Calu3 (cell line): ENCODE measurements at regions of chr6 and their contacts with region 1.

Region 1: DNA sequence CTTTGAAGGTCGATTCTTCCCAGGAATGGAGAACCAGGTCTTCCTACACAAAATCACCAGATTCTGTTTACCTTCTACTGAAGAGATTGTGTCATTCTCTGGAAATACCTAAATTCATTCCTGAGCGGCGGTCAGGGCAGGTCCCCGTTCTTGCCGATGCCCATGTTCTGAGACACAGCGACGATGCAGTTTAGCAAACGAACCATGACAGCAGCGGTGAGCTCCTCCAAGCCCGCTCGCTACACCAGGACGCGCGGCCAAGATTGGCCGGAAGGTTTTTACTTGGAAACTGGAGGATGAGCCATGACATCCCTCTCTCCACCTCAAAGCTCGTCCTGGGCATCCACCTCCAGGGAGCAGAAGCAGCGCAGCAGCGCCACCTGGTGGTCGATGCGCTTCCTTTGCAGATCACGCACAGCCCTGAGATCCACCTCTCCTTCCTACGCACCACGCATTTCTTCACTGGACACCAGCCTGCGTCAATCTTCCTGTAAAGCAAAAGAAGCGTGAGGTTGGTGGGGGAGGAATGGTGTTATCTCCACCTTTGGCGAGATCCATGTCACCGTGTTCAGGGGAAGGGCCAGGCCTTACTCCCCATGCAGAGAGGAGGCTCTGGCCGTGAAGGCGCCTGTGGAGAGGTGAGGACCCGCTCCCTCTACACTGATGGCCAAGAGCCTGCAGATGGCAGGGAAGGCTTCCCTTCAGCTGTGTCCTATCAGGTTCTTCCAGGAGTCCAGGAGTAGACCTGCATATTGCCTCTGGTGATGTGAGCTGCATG is 9.9 kb upstream of the HLA-B start:
- DNase-seq: peak; percentile 97
- H3K4me3 Mint-ChIP-seq: peak overlapping the region; percentile 54
- H3K27ac Mint-ChIP-seq: peak overlapping the region; percentile 15
- H3K4me1 Mint-ChIP-seq: peaks cover 9% of the 10 kb centered on the region
- H3K27me3 Mint-ChIP-seq: peaks cover 98% of the 10 kb centered on the region
- CTCF ChIP-seq: peak; percentile 99

Region 2: GRCh38 chr6:31139599-31139998 is 227.3 kb before region 1 on chr6:
- CTCF ChIA-PET with region 1: interaction called, 8 read pairs
- intact Hi-C with region 1: loop called (anchors 1 kb)
- DNase-seq: no peak
- H3K4me3 Mint-ChIP-seq: no peak overlapping the region
- H3K27ac Mint-ChIP-seq: no peak overlapping the region
- H3K4me1 Mint-ChIP-seq: peaks cover 29% of the 10 kb centered on the region
- H3K27me3 Mint-ChIP-seq: no peaks in the 10 kb centered on the region
- CTCF ChIP-seq: no peak

Region 3: GRCh38 chr6:31197559-31198305 is 169.2 kb before region 1 on chr6:
- CTCF ChIA-PET with region 1: interaction called, 77 read pairs
- intact Hi-C with region 1: loop called (anchors 1 kb)
- DNase-seq: peak; percentile 95
- H3K4me3 Mint-ChIP-seq: peak overlapping the region; percentile 88
- H3K27ac Mint-ChIP-seq: peak overlapping the region; percentile 33
- H3K4me1 Mint-ChIP-seq: peaks cover 61% of the 10 kb centered on the region
- H3K27me3 Mint-ChIP-seq: no peaks in the 10 kb centered on the region
- CTCF ChIP-seq: no peak

Region 4: DNA sequence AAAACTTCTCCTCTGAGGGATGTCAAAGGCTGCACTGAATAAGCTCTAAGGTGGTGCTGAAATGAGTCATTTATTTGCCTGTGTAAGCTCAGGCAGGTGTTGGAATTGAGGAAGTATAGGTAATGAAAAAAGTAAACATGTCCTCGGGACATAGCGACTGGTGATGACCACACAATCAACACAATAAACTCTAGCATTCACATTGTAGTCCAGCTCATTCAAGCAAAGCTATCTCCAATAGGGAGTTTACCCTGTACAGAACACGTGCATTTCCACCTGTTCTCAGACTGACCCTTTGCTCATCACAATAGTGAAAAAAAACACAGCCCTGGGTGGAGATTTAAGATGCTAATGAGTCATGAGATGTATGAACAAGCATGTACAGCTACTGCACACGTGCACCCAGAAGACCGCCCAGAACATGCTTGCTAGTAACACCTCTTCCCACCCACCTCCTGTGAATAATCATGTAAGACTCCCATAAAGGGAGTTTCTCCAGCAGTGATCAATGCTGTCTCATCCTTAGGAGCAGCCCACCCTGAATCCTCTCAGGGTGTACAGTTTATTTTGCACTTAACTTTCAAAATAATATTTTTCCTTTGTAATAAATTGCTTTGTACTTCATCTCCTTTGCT is 163.4 kb before region 1 on chr6:
- CTCF ChIA-PET with region 1: interaction called, 77 read pairs
- intact Hi-C with region 1: no loop called
- DNase-seq: peak; percentile 72
- H3K4me3 Mint-ChIP-seq: peak overlapping the region; percentile 75
- H3K27ac Mint-ChIP-seq: peak overlapping the region; percentile 99
- H3K4me1 Mint-ChIP-seq: peaks cover 75% of the 10 kb centered on the region
- H3K27me3 Mint-ChIP-seq: no peaks in the 10 kb centered on the region
- CTCF ChIP-seq: no peak

Region 5: GRCh38 chr6:31246050-31246521 is 120.8 kb before region 1 on chr6:
- CTCF ChIA-PET with region 1: interaction called, 19 read pairs
- intact Hi-C with region 1: no loop called
- DNase-seq: peak; percentile 80
- H3K4me3 Mint-ChIP-seq: no peak overlapping the region
- H3K27ac Mint-ChIP-seq: peak overlapping the region; percentile 15
- H3K4me1 Mint-ChIP-seq: peaks cover 20% of the 10 kb centered on the region
- H3K27me3 Mint-ChIP-seq: peaks cover 17% of the 10 kb centered on the region
- CTCF ChIP-seq: no peak

Region 6: DNA sequence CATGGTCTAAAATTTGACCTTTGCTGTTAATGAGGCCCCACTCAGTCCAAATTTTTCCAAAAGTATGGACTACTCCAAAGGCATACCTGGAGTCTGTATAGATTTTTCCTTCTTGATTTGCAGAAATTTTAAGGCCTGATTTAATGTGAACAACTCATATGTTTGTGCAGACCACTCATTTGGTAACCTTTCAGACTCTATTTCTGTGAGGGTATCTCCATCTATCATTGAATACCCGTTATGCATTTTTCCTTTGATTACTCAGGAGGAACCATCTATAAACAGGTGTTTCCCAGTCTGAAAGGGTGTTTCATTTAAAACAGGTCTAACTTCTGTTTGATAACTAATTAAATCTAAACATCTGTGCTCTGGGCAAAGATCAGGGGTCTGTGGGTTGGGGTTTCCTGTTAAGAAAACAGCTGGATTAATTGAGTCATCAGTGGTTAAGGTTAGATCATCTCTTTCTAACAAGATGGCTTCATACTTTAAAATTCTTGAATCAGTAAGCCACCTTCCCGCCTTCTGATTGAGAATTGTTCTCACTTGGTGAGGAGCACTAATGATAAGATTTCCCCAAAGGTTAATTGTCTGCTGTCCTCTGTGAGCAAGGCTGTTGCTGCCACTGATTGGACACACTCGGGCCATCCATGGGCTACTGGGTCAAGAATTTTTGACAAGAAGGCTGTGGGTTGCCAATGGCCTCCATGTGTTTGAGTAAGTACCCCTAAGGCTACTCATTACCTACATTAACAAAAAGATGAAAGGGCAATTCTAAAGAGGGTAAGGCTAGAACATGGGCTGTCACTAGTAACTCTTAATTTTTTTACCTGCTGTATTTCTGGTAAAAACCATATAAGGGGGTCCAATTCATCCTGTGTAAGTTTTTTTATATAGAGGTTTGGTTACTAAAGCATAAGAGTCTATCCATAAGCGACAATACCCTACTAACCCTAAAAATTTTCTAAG is 34.0 kb before region 1 on chr6:
- CTCF ChIA-PET with region 1: no interaction called
- intact Hi-C with region 1: no loop called
- DNase-seq: no peak
- H3K4me3 Mint-ChIP-seq: no peak overlapping the region
- H3K27ac Mint-ChIP-seq: no peak overlapping the region
- H3K4me1 Mint-ChIP-seq: no peaks in the 10 kb centered on the region
- H3K27me3 Mint-ChIP-seq: peaks cover 92% of the 10 kb centered on the region
- CTCF ChIP-seq: no peak

Region 7: DNA sequence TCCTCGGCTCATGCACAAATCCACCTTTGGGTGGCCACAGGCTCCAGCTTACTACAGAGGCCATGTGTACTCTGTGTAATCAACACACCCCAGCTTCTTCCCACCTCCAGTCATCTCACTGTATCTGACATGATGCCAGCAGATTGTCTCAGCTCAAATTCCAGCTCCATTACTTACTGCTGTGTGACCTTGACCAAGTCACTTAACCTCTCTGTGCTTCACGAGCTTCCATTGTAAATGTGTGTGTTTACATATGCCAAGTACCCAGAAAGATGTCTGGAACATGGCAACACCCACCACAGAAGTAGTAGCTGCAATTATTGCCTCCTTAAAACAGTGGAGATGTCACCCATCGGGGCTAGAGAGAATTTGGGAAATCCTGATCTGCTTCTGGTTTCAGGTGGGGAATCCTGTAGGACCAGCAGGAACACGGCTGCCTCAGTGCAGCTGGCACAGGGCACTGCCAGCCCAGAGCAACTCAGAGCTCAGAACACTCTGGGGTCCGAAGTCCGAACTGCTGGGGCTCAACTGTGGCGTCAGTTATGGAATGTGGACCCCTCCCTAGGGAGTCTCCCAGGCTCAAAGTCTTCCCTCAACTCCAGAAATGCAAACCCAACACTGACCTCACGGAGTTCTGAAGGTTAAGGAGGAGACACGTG is 11.3 kb after region 1 on chr6:
- CTCF ChIA-PET with region 1: interaction called, 20 read pairs
- intact Hi-C with region 1: no loop called
- DNase-seq: peak; percentile 35
- H3K4me3 Mint-ChIP-seq: no peak overlapping the region
- H3K27ac Mint-ChIP-seq: no peak overlapping the region
- H3K4me1 Mint-ChIP-seq: no peaks in the 10 kb centered on the region
- H3K27me3 Mint-ChIP-seq: peaks cover 67% of the 10 kb centered on the region
- CTCF ChIP-seq: no peak